Esophagus muscularis mucosa (tissue), 4 donors: ENCODE measurements at regions of chr2 and their contacts with region 1.

Region 1: DNA sequence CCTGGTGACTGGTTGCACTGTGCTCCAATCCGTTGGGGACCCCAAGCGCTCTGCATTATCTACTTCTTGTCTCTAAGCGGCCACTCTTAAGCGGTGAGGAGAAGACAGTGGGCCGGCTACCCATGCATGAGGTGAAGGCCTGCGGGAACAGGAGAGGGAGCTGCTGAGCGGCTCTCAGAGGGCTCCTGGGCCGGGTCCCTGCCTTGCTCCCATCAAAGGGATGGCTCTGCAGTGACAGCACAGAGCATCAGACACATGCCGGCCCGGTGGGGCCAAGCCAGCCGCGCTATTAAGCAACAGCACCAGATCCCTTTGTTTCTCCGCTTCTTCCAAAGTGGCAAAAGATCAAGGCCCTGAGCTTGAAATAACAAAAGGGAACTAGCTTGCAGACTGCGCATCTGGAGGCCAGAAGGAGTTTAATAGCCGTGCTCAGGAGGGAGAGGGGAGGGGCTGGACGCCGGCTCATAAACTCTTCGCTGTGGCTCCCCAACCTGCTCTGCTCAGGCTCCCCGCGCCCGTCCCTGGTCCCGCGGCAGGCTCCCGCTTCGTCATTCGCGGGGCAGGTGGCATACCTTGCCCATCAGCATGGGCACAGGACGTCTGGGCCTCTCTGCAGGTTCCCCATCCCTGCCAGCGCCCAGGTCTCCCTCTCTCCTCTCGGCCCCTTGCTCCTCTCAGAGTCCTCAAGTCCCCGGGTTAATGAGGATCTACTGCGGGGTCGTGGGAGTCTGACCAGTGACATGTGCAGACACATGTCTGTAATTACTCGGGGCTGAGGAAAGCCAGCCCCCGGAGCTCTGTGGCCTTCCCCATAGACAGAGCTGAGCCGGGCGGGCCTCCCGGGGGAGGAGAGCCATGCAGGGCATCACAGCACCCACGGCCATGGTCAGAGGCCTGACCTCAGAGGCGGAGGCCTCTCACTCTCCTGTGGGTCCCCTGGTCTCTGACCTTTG is 96.7 kb downstream of the ASB1 start:
- DNase-seq: no peak
- H3K4me3 ChIP-seq: peak overlapping the region in 1 of 4 donors; percentile 5
- H3K27ac ChIP-seq: peak overlapping the region; percentile 44 to 69 (median 58)
- H3K4me1 ChIP-seq: peaks cover 0 to 16% (median 13%) of the 10 kb centered on the region in 4 donors
- H3K27me3 ChIP-seq: no peaks in the 10 kb centered on the region
- CTCF ChIP-seq: peak; percentile 23 to 41 (median 38)
- EP300 ChIP-seq: no peak
- POLR2A ChIP-seq: no peak

Region 2: DNA sequence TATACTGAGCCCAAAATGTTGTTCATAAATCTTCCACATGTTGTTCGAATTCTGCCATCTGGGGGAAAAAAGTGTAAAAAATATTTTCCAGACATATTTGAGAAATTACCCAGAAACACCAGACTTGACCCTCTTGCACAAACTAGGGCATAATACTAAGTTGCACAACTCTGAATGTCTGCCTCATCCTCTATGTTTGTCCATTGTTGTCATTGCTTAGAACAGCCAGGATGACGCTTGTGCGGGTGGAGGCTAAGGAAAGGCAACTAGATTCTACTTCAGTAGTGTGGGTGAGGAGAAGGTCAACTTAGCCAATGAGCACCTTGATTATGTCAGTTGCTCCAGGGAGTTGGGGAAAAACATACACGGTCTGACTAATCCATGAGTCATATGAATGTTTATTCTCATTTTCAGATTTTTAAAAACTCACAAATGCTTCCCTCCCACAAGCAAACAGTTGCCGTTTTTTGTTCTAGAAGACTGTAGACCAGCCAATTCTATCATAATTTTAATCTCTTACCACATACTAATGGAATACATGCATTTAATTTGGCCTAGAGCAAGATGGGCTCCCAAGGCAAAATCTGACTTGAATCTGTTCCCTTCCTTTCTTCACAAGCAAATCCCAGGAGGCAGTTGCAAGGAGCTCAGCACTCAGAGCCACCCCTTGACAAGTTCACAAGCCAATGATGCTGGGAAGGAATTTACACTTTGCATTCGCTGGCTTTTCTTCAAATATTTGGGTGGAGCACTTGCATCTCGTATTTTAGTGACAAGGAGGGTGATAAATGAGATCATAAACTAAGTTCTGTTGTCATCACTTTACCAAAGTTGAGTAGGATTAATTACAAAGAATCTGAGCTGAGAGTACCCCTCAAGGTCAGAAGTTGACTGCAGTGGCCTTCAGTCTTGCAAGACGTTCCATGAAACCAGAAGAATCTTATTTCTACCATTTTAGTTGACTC is 161.2 kb after region 1 on chr2:
- intact Hi-C with region 1: loop called (anchors 10 kb)
- DNase-seq: peak; percentile 94
- H3K4me3 ChIP-seq: no peak overlapping the region
- H3K27ac ChIP-seq: peak overlapping the region; percentile 62 to 82 (median 74)
- H3K4me1 ChIP-seq: peaks cover 0 to 26% (median 18%) of the 10 kb centered on the region in 4 donors
- H3K27me3 ChIP-seq: no peaks in the 10 kb centered on the region
- CTCF ChIP-seq: no peak
- EP300 ChIP-seq: peak; percentile 87
- POLR2A ChIP-seq: no peak